CD4-positive, alpha-beta memory T cell (primary cell): ENCODE measurements at regions of chr4 and their contacts with region 1.

Region 1: DNA sequence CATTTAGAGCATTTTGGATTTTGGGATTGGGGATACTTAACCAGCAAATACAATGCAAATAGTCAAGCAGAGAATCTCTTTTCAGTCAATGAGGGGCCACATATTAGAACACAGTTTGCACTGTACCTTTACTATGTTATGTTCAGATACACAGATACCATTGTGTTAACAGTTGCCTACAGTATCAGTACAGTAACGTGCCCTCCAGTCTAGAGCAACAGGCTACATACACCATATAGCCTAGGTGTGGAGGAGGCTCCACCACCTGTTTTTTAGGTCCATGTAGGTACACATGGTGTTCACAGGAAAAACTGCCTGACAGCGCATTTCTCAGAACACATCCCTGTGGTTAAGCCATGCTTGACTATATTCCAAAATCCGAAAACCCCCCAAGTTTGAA is 9.1 kb downstream of the GRPEL1 start:
- DNase-seq: no peak
- H3K4me3 ChIP-seq: no peak overlapping the region
- H3K4me3 Mint-ChIP-seq: no peak overlapping the region
- H3K27ac ChIP-seq: no peak overlapping the region
- H3K27ac Mint-ChIP-seq: peak overlapping the region in 2 of 7 donors; percentile 38 to 68
- H3K4me1 ChIP-seq: peaks cover 3% of the 10 kb centered on the region
- H3K4me1 Mint-ChIP-seq: peaks cover 6 to 18% (median 8%) of the 10 kb centered on the region in 4 donors
- H3K27me3 ChIP-seq: no peaks in the 10 kb centered on the region
- H3K27me3 Mint-ChIP-seq: no peaks in the 10 kb centered on the region

Region 2: DNA sequence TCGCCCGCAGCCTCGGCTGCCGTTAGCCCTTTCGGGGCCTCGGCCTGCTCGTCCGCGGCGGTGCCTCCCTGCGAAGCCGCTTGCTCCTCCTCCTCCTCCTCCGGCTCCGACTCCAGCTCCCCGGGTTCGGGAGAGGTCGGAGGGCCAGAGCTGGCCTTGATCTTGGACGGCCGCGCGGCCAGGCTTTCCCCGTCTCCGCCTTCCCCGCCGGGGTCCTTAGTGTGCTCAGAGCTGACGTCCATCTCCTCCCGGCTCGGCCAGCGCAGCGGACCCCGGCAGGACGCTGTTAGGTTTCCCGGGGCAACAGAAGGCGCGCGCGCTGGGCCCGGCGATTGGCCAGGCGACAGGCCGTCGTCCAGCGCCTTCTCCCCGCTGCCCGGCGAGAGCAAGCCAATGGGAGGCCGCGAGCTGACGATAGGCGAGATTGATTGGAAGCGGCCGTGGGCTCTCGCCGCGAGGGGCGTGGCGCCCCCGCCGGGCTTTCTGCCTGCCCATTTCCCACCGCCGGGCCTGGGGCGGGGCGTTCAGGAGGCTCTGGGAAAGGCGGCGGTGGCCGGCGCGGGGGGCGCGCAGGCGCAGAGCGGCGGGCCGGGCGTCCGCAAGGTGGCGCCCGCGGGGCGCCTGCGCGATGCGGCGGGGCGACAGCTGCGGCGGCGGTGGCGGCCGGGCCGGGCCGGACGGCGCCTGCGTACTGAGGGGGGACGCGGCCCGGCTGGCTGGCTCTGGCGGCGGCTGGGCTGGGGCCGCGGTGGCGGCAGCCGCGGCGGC is 15.9 kb before region 1 on chr4 and contains the start of gene TADA2B:
- CTCF ChIA-PET with region 1: interaction called, 204 read pairs
- POLR2A ChIA-PET with region 1: interaction called, 231 read pairs
- intact Hi-C with region 1: no loop called
- DNase-seq: peak; percentile 90 to 94 (median 91)
- H3K4me3 ChIP-seq: peak within 1 kb of the TSS; percentile 83 to 91
- H3K4me3 Mint-ChIP-seq: peak within 1 kb of the TSS; percentile 89 to 97 (median 93)
- H3K27ac ChIP-seq: peak within 1 kb of the TSS; percentile 75
- H3K27ac Mint-ChIP-seq: peak within 1 kb of the TSS; percentile 81 to 95 (median 91)
- H3K4me1 ChIP-seq: peaks cover 45% of the 10 kb centered on the region
- H3K4me1 Mint-ChIP-seq: peaks cover 33 to 61% (median 40%) of the 10 kb centered on the region in 4 donors
- H3K27me3 ChIP-seq: no peaks in the 10 kb centered on the region
- H3K27me3 Mint-ChIP-seq: no peaks in the 10 kb centered on the region
- total RNA-seq, gene TADA2B: 46.4 to 49.0 TPM

Region 3: DNA sequence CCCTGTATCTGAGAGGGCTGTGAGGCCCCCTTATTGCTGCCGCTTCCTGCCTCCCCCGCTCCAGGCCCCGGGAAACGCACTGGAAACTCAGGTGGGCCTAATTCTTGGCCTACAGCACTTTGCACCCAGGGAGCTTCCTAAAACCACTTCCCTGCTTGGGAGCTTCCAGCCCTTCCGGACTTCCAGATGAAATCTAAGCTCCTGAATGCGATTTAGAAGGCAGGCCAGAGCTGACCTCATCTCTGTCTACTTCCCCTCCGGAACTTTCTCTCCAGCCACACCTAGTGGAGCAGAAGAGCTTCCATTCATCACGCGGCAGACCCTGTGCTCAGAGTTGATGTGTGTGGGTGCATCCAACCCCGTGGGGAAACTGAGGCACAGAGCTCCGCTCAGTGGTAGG is 217.7 kb after region 1 on chr4:
- CTCF ChIA-PET with region 1: no interaction called
- POLR2A ChIA-PET with region 1: no interaction called
- intact Hi-C with region 1: no loop called
- DNase-seq: no peak
- H3K4me3 ChIP-seq: no peak overlapping the region
- H3K4me3 Mint-ChIP-seq: no peak overlapping the region
- H3K27ac ChIP-seq: no peak overlapping the region
- H3K27ac Mint-ChIP-seq: no peak overlapping the region
- H3K4me1 ChIP-seq: no peaks in the 10 kb centered on the region
- H3K4me1 Mint-ChIP-seq: no peaks in the 10 kb centered on the region
- H3K27me3 ChIP-seq: no peaks in the 10 kb centered on the region
- H3K27me3 Mint-ChIP-seq: peaks cover 2 to 8% of the 10 kb centered on the region in 2 donors